Naive thymus-derived CD4-positive, alpha-beta T cell (primary cell): ENCODE measurements at regions of chr16 and their contacts with region 1.

Region 1: GRCh38 chr16:31032736-31033708 is at the start of gene STX4:
- DNase-seq: peak; percentile 90 to 100 (median 97)
- ATAC-seq: peak; percentile 89
- H3K4me3 ChIP-seq: peak within 1 kb of the TSS; percentile 82
- H3K4me3 Mint-ChIP-seq: peak within 1 kb of the TSS; percentile 78 to 100 (median 96)
- H3K27ac ChIP-seq: peak within 1 kb of the TSS; percentile 93
- H3K27ac Mint-ChIP-seq: peak within 1 kb of the TSS; percentile 84 to 99 (median 97)
- H3K4me1 ChIP-seq: peaks cover 14 to 16% of the 10 kb centered on the region in 2 donors
- H3K4me1 Mint-ChIP-seq: peaks cover 15 to 35% (median 22%) of the 10 kb centered on the region in 7 donors
- H3K27me3 ChIP-seq: no peaks in the 10 kb centered on the region
- H3K27me3 Mint-ChIP-seq: peaks cover 0 to 3% (median 0%) of the 10 kb centered on the region in 5 donors
- total RNA-seq, gene STX4: 77.9 to 114 (median 100) TPM

Region 2: DNA sequence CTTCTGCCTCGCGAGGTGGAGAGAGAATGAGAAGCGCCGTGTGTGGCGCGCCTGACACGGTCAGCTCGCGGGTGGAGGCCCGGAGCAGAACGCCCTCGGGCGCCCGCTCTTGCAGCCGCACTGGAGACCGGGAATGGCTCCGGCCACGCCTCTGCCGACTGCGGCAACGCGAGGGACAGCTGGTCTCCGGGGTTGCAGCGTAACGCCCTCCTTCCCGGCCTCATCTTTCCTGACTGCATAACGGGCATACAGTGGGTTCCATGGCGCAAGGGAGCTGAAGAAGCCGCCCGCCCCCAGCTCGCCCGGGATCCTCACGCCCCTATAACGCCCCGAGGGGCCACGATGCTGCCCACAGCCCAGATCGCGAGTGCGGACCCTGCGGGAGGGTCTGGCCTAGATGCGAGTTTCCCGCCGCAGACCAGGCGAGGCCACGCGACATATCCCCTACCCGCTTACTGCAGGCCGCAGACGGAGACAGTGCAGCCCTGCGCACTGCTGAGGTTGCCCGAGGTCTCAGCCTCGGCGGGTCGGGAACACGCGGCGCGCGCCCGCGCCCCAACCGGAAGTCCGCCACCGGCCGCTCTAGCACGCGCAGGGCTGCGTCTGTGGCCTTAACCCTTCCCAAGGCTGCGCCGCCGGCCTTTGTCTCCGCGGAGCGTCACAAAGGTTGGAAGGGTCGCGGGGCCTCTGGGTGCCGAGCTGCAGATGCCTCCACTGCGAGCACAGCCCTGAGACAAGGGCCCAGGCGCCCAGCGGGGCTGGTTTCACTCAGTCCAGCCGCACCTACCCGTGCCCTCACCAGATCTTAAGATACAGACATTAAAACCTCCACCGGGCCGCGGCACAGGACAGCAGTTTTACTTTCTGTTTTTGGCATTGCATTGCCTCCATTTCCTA is 158.0 kb before region 1 on chr16:
- CTCF ChIA-PET with region 1: no interaction called
- POLR2A ChIA-PET with region 1: no interaction called
- intact Hi-C with region 1: loop called (anchors 1 to 5 kb)
- DNase-seq: peak; percentile 78 to 90 (median 87)
- ATAC-seq: peak; percentile 97
- H3K4me3 ChIP-seq: peak overlapping the region; percentile 83
- H3K4me3 Mint-ChIP-seq: peak overlapping the region; percentile 84 to 98 (median 97)
- H3K27ac ChIP-seq: peak overlapping the region; percentile 87
- H3K27ac Mint-ChIP-seq: peak overlapping the region; percentile 79 to 99 (median 95)
- H3K4me1 ChIP-seq: peaks cover 11 to 25% of the 10 kb centered on the region in 2 donors
- H3K4me1 Mint-ChIP-seq: peaks cover 21 to 40% (median 32%) of the 10 kb centered on the region in 7 donors
- H3K27me3 ChIP-seq: no peaks in the 10 kb centered on the region
- H3K27me3 Mint-ChIP-seq: no peaks in the 10 kb centered on the region

Region 3: GRCh38 chr16:30957456-30958174 is 75.4 kb before region 1 on chr16 and contains the start of gene SETD1A:
- CTCF ChIA-PET with region 1: no interaction called
- POLR2A ChIA-PET with region 1: interaction called, 3 read pairs
- intact Hi-C with region 1: loop called (anchors 1 kb)
- DNase-seq: peak; percentile 94 to 99 (median 97)
- ATAC-seq: peak; percentile 93
- H3K4me3 ChIP-seq: peak within 1 kb of the TSS; percentile 100
- H3K4me3 Mint-ChIP-seq: peak within 1 kb of the TSS; percentile 81 to 97 (median 96)
- H3K27ac ChIP-seq: peak within 1 kb of the TSS; percentile 93
- H3K27ac Mint-ChIP-seq: peak within 1 kb of the TSS; percentile 97 to 100 (median 98)
- H3K4me1 ChIP-seq: peaks cover 16 to 22% of the 10 kb centered on the region in 2 donors
- H3K4me1 Mint-ChIP-seq: peaks cover 23 to 46% (median 29%) of the 10 kb centered on the region in 7 donors
- H3K27me3 ChIP-seq: no peaks in the 10 kb centered on the region
- H3K27me3 Mint-ChIP-seq: peaks cover 0 to 3% (median 0%) of the 10 kb centered on the region in 5 donors
- total RNA-seq, gene SETD1A: 27.0 to 47.2 (median 36.8) TPM

Region 4: DNA sequence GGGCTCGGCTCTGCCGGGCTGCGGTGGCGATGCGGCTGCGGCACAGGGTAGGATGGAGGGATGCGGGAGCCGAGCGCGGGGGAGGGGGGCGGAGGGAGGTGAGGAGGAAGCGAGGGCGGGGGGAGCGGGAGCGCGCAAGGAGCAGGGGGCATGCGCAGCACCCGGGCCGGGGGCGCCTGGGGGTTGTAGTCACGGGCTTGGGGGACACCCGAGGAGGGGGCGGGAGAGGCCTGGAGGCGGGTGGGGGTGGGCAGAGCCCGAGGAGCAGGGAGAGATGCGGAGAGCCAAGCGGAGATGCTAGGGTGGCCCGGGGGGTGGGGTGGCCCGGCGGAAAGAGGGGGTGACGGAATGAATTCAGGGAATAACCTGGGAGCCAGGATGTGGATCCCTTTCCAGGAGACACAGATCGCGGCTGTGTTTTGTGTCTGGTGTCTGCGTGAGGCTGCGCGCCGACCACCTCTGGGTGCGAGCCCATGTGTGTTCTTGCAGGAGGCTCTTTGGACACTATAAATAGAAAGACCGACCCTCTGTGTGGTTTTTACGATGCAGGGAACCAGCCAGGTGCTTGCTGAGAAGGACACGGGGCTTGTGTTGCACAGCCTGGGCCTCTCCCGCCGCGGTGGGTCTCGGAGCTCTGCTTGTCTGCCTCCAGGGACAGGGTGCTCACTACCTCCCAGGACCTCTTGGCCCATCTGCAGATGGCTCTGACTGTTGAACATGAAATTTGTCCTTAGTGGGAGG is 22.3 kb before region 1 on chr16 and contains the start of gene STX1B:
- CTCF ChIA-PET with region 1: no interaction called
- POLR2A ChIA-PET with region 1: interaction called, 3 read pairs
- intact Hi-C with region 1: loop called (anchors 1 to 2 kb)
- DNase-seq: peak; percentile 35 to 72 (median 53)
- ATAC-seq: peak; percentile 84
- H3K4me3 ChIP-seq: peak within 1 kb of the TSS; percentile 55
- H3K4me3 Mint-ChIP-seq: peak within 1 kb of the TSS; percentile 67 to 91 (median 81)
- H3K27ac ChIP-seq: peak within 1 kb of the TSS; percentile 39
- H3K27ac Mint-ChIP-seq: peak within 1 kb of the TSS in 8 of 9 donors; percentile 29 to 83 (median 58)
- H3K4me1 ChIP-seq: peaks cover 3 to 6% of the 10 kb centered on the region in 2 donors
- H3K4me1 Mint-ChIP-seq: peaks cover 13 to 29% (median 20%) of the 10 kb centered on the region in 7 donors
- H3K27me3 ChIP-seq: no peaks in the 10 kb centered on the region
- H3K27me3 Mint-ChIP-seq: peaks cover 0 to 64% (median 22%) of the 10 kb centered on the region in 5 donors
- total RNA-seq, gene STX1B: 1.7 to 5.2 (median 4.2) TPM

Region 5: DNA sequence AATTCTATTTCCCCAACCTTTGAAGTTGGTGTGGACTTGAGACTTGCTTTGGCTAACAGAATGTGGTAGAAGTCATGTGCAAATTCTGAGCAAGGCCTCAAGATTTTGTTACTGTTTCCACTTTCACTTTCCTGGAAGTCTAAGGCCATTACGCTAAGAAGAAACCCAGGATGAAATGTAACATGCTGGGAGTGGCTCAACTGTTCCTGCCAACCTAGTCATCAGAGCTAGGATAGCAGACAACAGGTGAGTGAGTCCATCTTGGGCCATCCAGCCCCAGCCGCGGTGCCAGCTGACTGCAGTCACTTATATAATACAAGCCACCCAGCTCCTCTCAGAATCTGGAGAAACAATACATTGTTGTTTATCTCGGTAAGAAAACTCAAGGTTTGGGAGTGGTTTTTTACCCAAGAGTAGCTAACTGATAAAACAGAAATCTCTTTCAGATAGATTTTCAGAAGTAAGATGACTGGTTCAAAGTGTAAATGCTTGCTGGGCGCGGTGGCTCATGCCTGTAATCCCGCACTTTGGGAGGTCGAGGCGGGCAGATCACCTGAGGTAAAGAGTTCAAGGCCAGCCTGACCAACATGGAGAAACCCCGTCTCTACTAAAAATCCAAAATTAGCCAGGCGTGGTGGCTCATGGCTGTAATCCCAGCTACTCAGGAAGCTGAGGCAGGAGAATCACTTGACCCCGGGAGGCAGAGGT is 10.3 kb before region 1 on chr16:
- CTCF ChIA-PET with region 1: no interaction called
- POLR2A ChIA-PET with region 1: no interaction called
- intact Hi-C with region 1: no loop called
- DNase-seq: no peak
- ATAC-seq: no peak
- H3K4me3 ChIP-seq: no peak overlapping the region
- H3K4me3 Mint-ChIP-seq: peak overlapping the region in 1 of 10 donors; percentile 17
- H3K27ac ChIP-seq: no peak overlapping the region
- H3K27ac Mint-ChIP-seq: peak overlapping the region in 1 of 9 donors; percentile 79
- H3K4me1 ChIP-seq: no peaks in the 10 kb centered on the region
- H3K4me1 Mint-ChIP-seq: peaks cover 0 to 10% (median 0%) of the 10 kb centered on the region in 7 donors
- H3K27me3 ChIP-seq: no peaks in the 10 kb centered on the region
- H3K27me3 Mint-ChIP-seq: no peaks in the 10 kb centered on the region

Region 6: GRCh38 chr16:31117391-31118197 is 84.6 kb after region 1 on chr16 and contains the start of gene KAT8:
- CTCF ChIA-PET with region 1: no interaction called
- POLR2A ChIA-PET with region 1: interaction called, 4 read pairs
- intact Hi-C with region 1: loop called (anchors 1 kb)
- DNase-seq: peak; percentile 88 to 99 (median 97)
- ATAC-seq: peak; percentile 95
- H3K4me3 ChIP-seq: peak within 1 kb of the TSS; percentile 65
- H3K4me3 Mint-ChIP-seq: peak within 1 kb of the TSS; percentile 86 to 95 (median 90)
- H3K27ac ChIP-seq: peak within 1 kb of the TSS; percentile 98
- H3K27ac Mint-ChIP-seq: peak within 1 kb of the TSS; percentile 77 to 96 (median 89)
- H3K4me1 ChIP-seq: peaks cover 7 to 15% of the 10 kb centered on the region in 2 donors
- H3K4me1 Mint-ChIP-seq: peaks cover 12 to 32% (median 24%) of the 10 kb centered on the region in 7 donors
- H3K27me3 ChIP-seq: no peaks in the 10 kb centered on the region
- H3K27me3 Mint-ChIP-seq: no peaks in the 10 kb centered on the region
- total RNA-seq, gene KAT8: 63.0 to 134 (median 112) TPM

Region 7: GRCh38 chr16:31179747-31180459 is 146.9 kb after region 1 on chr16 and contains the start of gene FUS:
- CTCF ChIA-PET with region 1: no interaction called
- POLR2A ChIA-PET with region 1: interaction called, 9 read pairs
- intact Hi-C with region 1: loop called (anchors 1 kb)
- DNase-seq: peak; percentile 88 to 97 (median 95)
- ATAC-seq: peak; percentile 87
- H3K4me3 ChIP-seq: peak within 1 kb of the TSS; percentile 76
- H3K4me3 Mint-ChIP-seq: peak within 1 kb of the TSS; percentile 92 to 99 (median 96)
- H3K27ac ChIP-seq: peak within 1 kb of the TSS; percentile 90
- H3K27ac Mint-ChIP-seq: peak within 1 kb of the TSS; percentile 96 to 100 (median 99)
- H3K4me1 ChIP-seq: peaks cover 56% of the 10 kb centered on the region in 2 donors
- H3K4me1 Mint-ChIP-seq: peaks cover 49 to 72% (median 56%) of the 10 kb centered on the region in 7 donors
- H3K27me3 ChIP-seq: no peaks in the 10 kb centered on the region
- H3K27me3 Mint-ChIP-seq: peaks cover 0 to 3% (median 0%) of the 10 kb centered on the region in 5 donors
- total RNA-seq, gene FUS: 597 to 956 (median 714) TPM